Mammary epithelial cell (primary cell): ENCODE measurements at regions of chr5 and their contacts with region 1.

Region 1: GRCh38 chr5:55691265-55692105 is 20.6 kb downstream of the SLC38A9 start:
- DNase-seq: peak; percentile 31
- H3K4me3 ChIP-seq: no peak overlapping the region
- H3K27ac ChIP-seq: no peak overlapping the region
- H3K4me1 ChIP-seq: no peaks in the 10 kb centered on the region
- H3K27me3 ChIP-seq: no peaks in the 10 kb centered on the region
- CTCF ChIP-seq: peak; percentile 55 to 62

Region 2: GRCh38 chr5:55172051-55172899 is 519.2 kb before region 1 on chr5:
- CTCF ChIA-PET with region 1: no interaction called
- dilution Hi-C with region 1: no loop called
- in situ Hi-C with region 1: loop called (anchors 25 kb)
- intact Hi-C with region 1: loop called (anchors 1 kb)
- DNase-seq: peak; percentile 81
- H3K4me3 ChIP-seq: peak overlapping the region; percentile 55 to 81 (median 62)
- H3K27ac ChIP-seq: peak overlapping the region; percentile 35
- H3K4me1 ChIP-seq: peaks cover 31% of the 10 kb centered on the region
- H3K27me3 ChIP-seq: no peaks in the 10 kb centered on the region
- CTCF ChIP-seq: peak; percentile 81

Region 3: GRCh38 chr5:55226027-55226933 is 465.2 kb before region 1 on chr5:
- CTCF ChIA-PET with region 1: no interaction called
- dilution Hi-C with region 1: no loop called
- in situ Hi-C with region 1: no loop called
- intact Hi-C with region 1: loop called (anchors 5 kb)
- DNase-seq: peak; percentile 53
- H3K4me3 ChIP-seq: peak overlapping the region; percentile 58 to 65 (median 64)
- H3K27ac ChIP-seq: no peak overlapping the region
- H3K4me1 ChIP-seq: peaks cover 13% of the 10 kb centered on the region
- H3K27me3 ChIP-seq: no peaks in the 10 kb centered on the region
- CTCF ChIP-seq: peak; percentile 56 to 81

Region 4: GRCh38 chr5:55344392-55344992 is 347.0 kb before region 1 on chr5:
- CTCF ChIA-PET with region 1: no interaction called
- dilution Hi-C with region 1: no loop called
- in situ Hi-C with region 1: no loop called
- intact Hi-C with region 1: loop called (anchors 1 kb)
- DNase-seq: peak; percentile 29
- H3K4me3 ChIP-seq: no peak overlapping the region
- H3K27ac ChIP-seq: no peak overlapping the region
- H3K4me1 ChIP-seq: no peaks in the 10 kb centered on the region
- H3K27me3 ChIP-seq: no peaks in the 10 kb centered on the region
- CTCF ChIP-seq: peak; percentile 87

Region 5: DNA sequence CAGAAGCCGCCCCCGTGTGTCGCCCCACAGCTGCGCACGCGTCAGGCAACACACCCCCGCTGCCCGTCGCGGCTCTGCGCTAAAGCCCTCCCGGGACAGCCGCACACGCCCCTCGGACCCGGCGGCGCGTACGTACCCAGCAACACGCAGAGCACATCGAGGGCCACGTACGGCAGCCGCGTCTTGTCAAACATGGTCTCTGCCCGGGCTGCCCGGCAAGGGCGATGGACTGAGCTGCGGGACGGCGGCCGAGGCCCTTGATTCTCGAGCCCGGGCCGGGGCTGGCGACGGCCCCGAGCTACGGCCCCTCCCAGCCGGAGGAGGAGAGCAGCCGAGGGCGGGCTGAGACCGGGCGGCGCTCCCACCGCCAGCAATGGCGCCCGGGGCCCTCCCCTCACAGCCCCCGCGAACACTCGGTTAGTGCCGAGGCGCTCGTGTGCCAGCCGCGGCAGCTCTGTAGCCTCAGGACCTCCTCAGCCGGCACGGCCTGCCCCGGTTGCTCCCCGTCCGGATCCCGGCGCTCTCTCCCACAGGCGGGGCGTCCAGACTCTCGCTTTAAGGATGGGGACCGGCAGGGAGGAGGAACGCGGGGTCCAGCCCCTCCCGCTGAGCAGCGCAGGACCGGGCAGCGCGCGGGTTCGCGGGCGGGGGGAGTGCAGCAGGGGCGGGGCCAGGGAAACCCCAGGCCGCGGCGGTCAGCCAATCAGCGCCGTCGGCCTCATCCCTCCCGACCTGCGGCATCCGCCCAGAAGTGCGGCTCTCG is 156.9 kb before region 1 on chr5 and contains the start of gene PLPP1:
- CTCF ChIA-PET with region 1: no interaction called
- dilution Hi-C with region 1: no loop called
- in situ Hi-C with region 1: no loop called
- intact Hi-C with region 1: loop called (anchors 5 kb)
- DNase-seq: peak; percentile 91
- H3K4me3 ChIP-seq: peak within 1 kb of the TSS; percentile 52 to 93 (median 72)
- H3K27ac ChIP-seq: peak within 1 kb of the TSS; percentile 62
- H3K4me1 ChIP-seq: peaks cover 11% of the 10 kb centered on the region
- H3K27me3 ChIP-seq: no peaks in the 10 kb centered on the region
- CTCF ChIP-seq: no peak
- total RNA-seq, gene PLPP1: 18.8 to 122 TPM

Region 6: GRCh38 chr5:55758231-55758630 is 66.7 kb after region 1 on chr5:
- CTCF ChIA-PET with region 1: no interaction called
- dilution Hi-C with region 1: no loop called
- in situ Hi-C with region 1: no loop called
- intact Hi-C with region 1: no loop called
- DNase-seq: no peak
- H3K4me3 ChIP-seq: no peak overlapping the region
- H3K27ac ChIP-seq: no peak overlapping the region
- H3K4me1 ChIP-seq: no peaks in the 10 kb centered on the region
- H3K27me3 ChIP-seq: peaks cover 2% of the 10 kb centered on the region
- CTCF ChIP-seq: no peak

Region 7: DNA sequence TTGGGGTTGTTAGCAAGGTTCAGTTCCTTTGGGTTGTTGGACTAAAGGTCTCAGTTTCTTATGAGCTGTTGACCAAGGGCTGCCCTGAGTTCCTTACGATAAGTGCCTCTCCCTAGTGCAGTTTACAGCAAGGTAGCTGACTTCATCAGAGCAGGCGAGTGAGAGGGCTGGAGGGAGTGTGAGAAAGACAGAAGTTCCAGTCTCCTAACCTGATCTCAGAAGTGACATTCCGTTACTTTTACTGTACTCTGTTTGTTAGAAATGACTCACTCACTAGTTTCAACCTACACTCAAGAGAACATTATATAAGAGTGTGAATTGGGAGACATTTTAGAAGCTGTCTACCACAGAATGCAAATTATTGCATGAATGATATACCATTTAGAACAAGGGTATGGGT is 138.5 kb after region 1 on chr5:
- CTCF ChIA-PET with region 1: no interaction called
- dilution Hi-C with region 1: no loop called
- in situ Hi-C with region 1: no loop called
- intact Hi-C with region 1: no loop called
- DNase-seq: peak; percentile 40
- H3K4me3 ChIP-seq: no peak overlapping the region
- H3K27ac ChIP-seq: no peak overlapping the region
- H3K4me1 ChIP-seq: no peaks in the 10 kb centered on the region
- H3K27me3 ChIP-seq: no peaks in the 10 kb centered on the region
- CTCF ChIP-seq: no peak